Endothelial cell of umbilical vein (primary cell): ENCODE measurements at regions of chr3 and their contacts with region 1.

Region 1: DNA sequence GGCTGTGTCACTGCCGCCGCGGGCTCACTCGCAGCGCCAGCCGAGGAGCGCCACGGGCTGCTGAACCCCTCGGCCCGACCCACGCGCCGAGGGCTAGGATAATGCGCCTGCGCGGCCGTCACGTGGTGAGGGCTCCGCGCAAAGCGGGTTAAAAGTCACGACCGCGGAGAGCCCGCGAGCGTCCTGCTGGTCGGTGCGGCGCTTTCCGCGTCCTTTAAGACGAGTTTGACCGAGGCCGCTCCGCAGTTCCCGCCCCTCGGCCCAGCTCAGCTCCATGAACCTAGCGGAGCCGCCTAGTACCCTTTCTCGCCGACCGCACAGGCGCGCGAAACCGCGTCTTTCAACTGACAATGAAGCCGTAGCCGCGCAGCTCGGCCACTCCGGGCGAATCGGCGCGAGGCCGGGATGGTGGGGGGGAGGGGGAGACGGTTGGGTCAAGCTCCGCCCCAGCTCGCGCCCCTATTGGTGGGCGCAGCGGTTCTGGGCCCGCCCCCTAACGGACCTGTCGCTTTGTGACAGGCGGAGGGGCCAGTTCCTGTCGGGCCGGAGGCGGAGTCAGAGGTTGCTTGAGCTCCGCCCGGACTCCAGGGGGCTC is 636 bp upstream of the STT3B start:
- DNase-seq: peak; percentile 98
- H3K4me3 ChIP-seq: peak overlapping the region; percentile 73 to 94 (median 74)
- H3K27ac ChIP-seq: peak overlapping the region; percentile 90
- H3K4me1 ChIP-seq: peaks cover 24% of the 10 kb centered on the region
- H3K27me3 ChIP-seq: peaks cover 12 to 15% of the 10 kb centered on the region in 2 experiments
- CTCF ChIP-seq: no peak
- POLR2A ChIP-seq: peak; percentile 98

Region 2: GRCh38 chr3:30768703-30769685 is 763.1 kb before region 1 on chr3:
- CTCF ChIA-PET with region 1: interaction called, 3 read pairs
- POLR2A ChIA-PET with region 1: no interaction called
- dilution Hi-C with region 1: no loop called
- intact Hi-C with region 1: loop called (anchors 5 kb)
- DNase-seq: peak; percentile 70
- H3K4me3 ChIP-seq: no peak overlapping the region
- H3K27ac ChIP-seq: no peak overlapping the region
- H3K4me1 ChIP-seq: no peaks in the 10 kb centered on the region
- H3K27me3 ChIP-seq: peaks cover 0 to 3% of the 10 kb centered on the region in 2 experiments
- CTCF ChIP-seq: peak; percentile 80 to 85
- POLR2A ChIP-seq: no peak

Region 3: DNA sequence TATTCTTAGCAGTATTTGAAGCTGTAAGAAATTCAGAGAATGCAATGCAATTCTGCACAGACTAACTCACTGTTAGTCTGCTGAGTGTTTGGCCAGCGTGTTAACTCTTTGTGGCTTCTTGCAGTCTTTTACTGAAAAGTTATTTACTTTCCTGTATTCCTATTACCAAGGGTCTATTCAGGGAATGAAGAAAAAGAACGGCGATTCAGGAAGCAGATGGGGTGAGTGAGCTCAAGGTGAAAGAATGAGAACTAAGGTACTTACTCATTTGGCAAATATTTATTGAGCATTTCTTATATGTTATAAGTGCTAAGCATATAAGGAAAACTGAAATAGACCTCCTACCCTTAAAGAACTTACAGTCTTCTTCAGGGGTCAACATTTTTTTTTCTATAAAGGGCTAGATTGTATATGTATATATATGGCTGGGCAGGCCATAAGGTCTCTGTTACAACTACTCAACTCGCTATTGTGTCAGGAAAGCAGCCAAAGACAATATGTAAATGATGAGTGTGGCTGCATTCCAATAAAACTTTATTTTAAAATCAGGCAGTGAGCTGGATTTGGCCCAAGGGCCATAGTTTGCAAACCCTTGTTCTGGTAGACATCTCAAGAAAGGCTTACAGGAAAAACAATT is 365.7 kb before region 1 on chr3:
- CTCF ChIA-PET with region 1: interaction called, 6 read pairs
- POLR2A ChIA-PET with region 1: interaction called, 7 read pairs
- dilution Hi-C with region 1: no loop called
- intact Hi-C with region 1: loop called (anchors 1 kb)
- DNase-seq: peak; percentile 91
- H3K4me3 ChIP-seq: peak overlapping the region in 1 of 3 experiments; percentile 19
- H3K27ac ChIP-seq: peak overlapping the region; percentile 87
- H3K4me1 ChIP-seq: peaks cover 32% of the 10 kb centered on the region
- H3K27me3 ChIP-seq: no peaks in the 10 kb centered on the region
- CTCF ChIP-seq: no peak
- POLR2A ChIP-seq: peak; percentile 17

Region 4: GRCh38 chr3:31275038-31275562 is 257.0 kb before region 1 on chr3:
- CTCF ChIA-PET with region 1: interaction called, 4 read pairs
- POLR2A ChIA-PET with region 1: no interaction called
- dilution Hi-C with region 1: no loop called
- intact Hi-C with region 1: loop called (anchors 1 kb)
- DNase-seq: peak; percentile 56
- H3K4me3 ChIP-seq: no peak overlapping the region
- H3K27ac ChIP-seq: peak overlapping the region; percentile 42
- H3K4me1 ChIP-seq: peaks cover 38% of the 10 kb centered on the region
- H3K27me3 ChIP-seq: no peaks in the 10 kb centered on the region
- CTCF ChIP-seq: no peak
- POLR2A ChIP-seq: no peak

Region 5: GRCh38 chr3:31960793-31961431 is 428.8 kb after region 1 on chr3:
- CTCF ChIA-PET with region 1: no interaction called
- POLR2A ChIA-PET with region 1: no interaction called
- dilution Hi-C with region 1: no loop called
- intact Hi-C with region 1: loop called (anchors 5 kb)
- DNase-seq: no peak
- H3K4me3 ChIP-seq: no peak overlapping the region
- H3K27ac ChIP-seq: no peak overlapping the region
- H3K4me1 ChIP-seq: peaks cover 24% of the 10 kb centered on the region
- H3K27me3 ChIP-seq: no peaks in the 10 kb centered on the region
- CTCF ChIP-seq: no peak
- POLR2A ChIP-seq: no peak

Region 6: GRCh38 chr3:32138545-32139104 is 606.5 kb after region 1 on chr3:
- CTCF ChIA-PET with region 1: no interaction called
- POLR2A ChIA-PET with region 1: no interaction called
- dilution Hi-C with region 1: no loop called
- intact Hi-C with region 1: loop called (anchors 2 kb)
- DNase-seq: peak; percentile 80
- H3K4me3 ChIP-seq: no peak overlapping the region
- H3K27ac ChIP-seq: no peak overlapping the region
- H3K4me1 ChIP-seq: peaks cover 28% of the 10 kb centered on the region
- H3K27me3 ChIP-seq: no peaks in the 10 kb centered on the region
- CTCF ChIP-seq: no peak
- POLR2A ChIP-seq: no peak